Activated CD4-positive, alpha-beta T cell treated with anti-CD3 and anti-CD28 coated beads, Interleukin-2, amount 10 ng/mL, durations not matched to agents 24 days and 14 days (primary cell): ENCODE measurements at regions of chr5 and their contacts with region 1.

Region 1: DNA sequence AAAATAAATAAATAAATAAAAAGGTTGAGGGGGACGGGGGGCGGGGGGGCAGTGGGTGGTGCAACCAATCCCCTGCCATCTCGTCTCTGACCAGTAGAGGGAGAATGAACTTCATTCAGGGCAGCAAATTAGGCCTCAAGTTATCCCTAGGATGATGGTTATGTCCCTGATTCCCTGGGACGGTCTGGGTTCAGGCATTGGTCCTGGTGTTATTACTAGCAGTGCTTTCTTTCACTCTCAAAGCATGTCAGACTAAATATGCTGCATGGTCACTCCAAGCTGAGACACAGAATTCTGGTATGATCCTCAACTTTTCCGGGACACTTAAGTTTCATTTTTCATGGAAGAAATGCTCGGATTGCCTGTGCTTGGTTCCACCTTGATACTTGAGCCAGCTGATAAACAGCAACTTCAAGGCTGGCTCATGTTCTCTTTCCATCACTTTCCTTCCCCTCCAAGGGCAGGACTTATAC is 59.4 kb downstream of the DAP start:
- DNase-seq: peak; percentile 75
- H3K4me3 Mint-ChIP-seq: no peak overlapping the region
- H3K27ac Mint-ChIP-seq: no peak overlapping the region
- H3K4me1 Mint-ChIP-seq: peaks cover 26% of the 10 kb centered on the region
- H3K27me3 Mint-ChIP-seq: no peaks in the 10 kb centered on the region

Region 2: GRCh38 chr5:9082996-9083395 is 1618.6 kb before region 1 on chr5:
- intact Hi-C with region 1: no loop called
- DNase-seq: no peak
- H3K4me3 Mint-ChIP-seq: no peak overlapping the region
- H3K27ac Mint-ChIP-seq: no peak overlapping the region
- H3K4me1 Mint-ChIP-seq: no peaks in the 10 kb centered on the region
- H3K27me3 Mint-ChIP-seq: no peaks in the 10 kb centered on the region

Region 3: GRCh38 chr5:10856683-10857337 is 155.2 kb after region 1 on chr5:
- intact Hi-C with region 1: loop called (anchors 10 kb)
- DNase-seq: peak; percentile 70
- H3K4me3 Mint-ChIP-seq: no peak overlapping the region
- H3K27ac Mint-ChIP-seq: no peak overlapping the region
- H3K4me1 Mint-ChIP-seq: no peaks in the 10 kb centered on the region
- H3K27me3 Mint-ChIP-seq: peaks cover 14% of the 10 kb centered on the region

Region 4: GRCh38 chr5:10987930-10988504 is 286.4 kb after region 1 on chr5:
- intact Hi-C with region 1: no loop called
- DNase-seq: peak; percentile 88
- H3K4me3 Mint-ChIP-seq: no peak overlapping the region
- H3K27ac Mint-ChIP-seq: no peak overlapping the region
- H3K4me1 Mint-ChIP-seq: peaks cover 7% of the 10 kb centered on the region
- H3K27me3 Mint-ChIP-seq: peaks cover 4% of the 10 kb centered on the region